ENCODE measurements at regions of chr5 and their contacts with region 1.

Region 1: GRCh38 chr5:110738812-110739651 is at the start of gene SLC25A46:
- DNase-seq: peak; percentile 85
- H3K4me3 Mint-ChIP-seq: peak within 1 kb of the TSS; percentile 97
- H3K27ac Mint-ChIP-seq: peak within 1 kb of the TSS; percentile 96
- H3K4me1 Mint-ChIP-seq: peaks cover 39% of the 10 kb centered on the region
- H3K27me3 Mint-ChIP-seq: peaks cover 11% of the 10 kb centered on the region
- total RNA-seq, gene SLC25A46: 54.6 and 55.4 TPM in 2 replicates

Region 2: GRCh38 chr5:110726249-110727024 is 12.6 kb before region 1 on chr5 and contains the start of gene TMEM232:
- intact Hi-C with region 1: loop called (anchors 1 kb)
- DNase-seq: peak; percentile 61
- H3K4me3 Mint-ChIP-seq: peak within 1 kb of the TSS; percentile 85
- H3K27ac Mint-ChIP-seq: peak within 1 kb of the TSS; percentile 74
- H3K4me1 Mint-ChIP-seq: peaks cover 9% of the 10 kb centered on the region
- H3K27me3 Mint-ChIP-seq: no peaks in the 10 kb centered on the region
- total RNA-seq, gene TMEM232: 0.61 and 1.3 TPM in 2 replicates

Measured in activated T-helper 1 cell treated with anti-CD3 and anti-CD28 coated beads, Interleukin-12 subunit alpha, Interleukin-12 subunit beta, Interleukin-2, Interleukin-4 antibody, amounts not matched to agents 30 ng/mL and 10 ng/mL and 1 ng/mL, durations not matched to agents 14 hours and 24 hours and 36 hours (primary cell).